Breast epithelium (tissue), 4 donors: ENCODE measurements at regions of chr17 and their contacts with region 1.

Region 1: GRCh38 chr17:21397341-21398190 is 21.4 kb downstream of the KCNJ12 start:
- DNase-seq: no peak
- H3K4me3 ChIP-seq: no peak overlapping the region
- H3K27ac ChIP-seq: peak overlapping the region in 1 of 2 donors; percentile 58
- H3K4me1 ChIP-seq: no peaks in the 10 kb centered on the region
- H3K27me3 ChIP-seq: no peaks in the 10 kb centered on the region
- CTCF ChIP-seq: no peak
- POLR2A ChIP-seq: no peak

Region 2: DNA sequence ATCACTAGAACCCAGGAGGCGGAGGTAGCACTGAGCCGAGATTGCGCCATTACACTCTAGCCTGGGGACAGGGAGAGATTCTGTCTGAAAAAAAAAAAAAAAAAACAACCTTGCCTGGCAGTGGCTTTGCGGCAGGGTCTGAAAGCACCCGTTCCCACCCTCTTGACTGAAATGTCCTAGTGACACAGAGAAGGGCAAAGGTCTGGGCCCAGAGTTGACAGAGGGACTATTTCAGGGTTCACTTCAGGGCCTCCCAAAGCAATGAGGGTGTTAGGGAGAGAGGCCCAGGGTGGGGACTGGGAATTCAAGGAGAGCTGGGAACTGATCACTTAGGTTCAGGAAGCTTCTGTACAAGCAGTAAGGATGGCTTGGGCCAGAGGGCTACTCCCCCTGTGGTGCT is 831.9 kb before region 1 on chr17:
- intact Hi-C with region 1: loop called (anchors 5 kb)
- DNase-seq: no peak
- H3K4me3 ChIP-seq: no peak overlapping the region
- H3K27ac ChIP-seq: no peak overlapping the region
- H3K4me1 ChIP-seq: no peaks in the 10 kb centered on the region
- H3K27me3 ChIP-seq: no peaks in the 10 kb centered on the region
- CTCF ChIP-seq: no peak
- POLR2A ChIP-seq: no peak

Region 3: GRCh38 chr17:21345236-21345635 is 52.3 kb before region 1 on chr17:
- intact Hi-C with region 1: no loop called
- DNase-seq: peak in 1 of 2 donors; percentile 68
- H3K4me3 ChIP-seq: no peak overlapping the region
- H3K27ac ChIP-seq: no peak overlapping the region
- H3K4me1 ChIP-seq: no peaks in the 10 kb centered on the region
- H3K27me3 ChIP-seq: no peaks in the 10 kb centered on the region
- CTCF ChIP-seq: no peak
- POLR2A ChIP-seq: no peak

Region 4: DNA sequence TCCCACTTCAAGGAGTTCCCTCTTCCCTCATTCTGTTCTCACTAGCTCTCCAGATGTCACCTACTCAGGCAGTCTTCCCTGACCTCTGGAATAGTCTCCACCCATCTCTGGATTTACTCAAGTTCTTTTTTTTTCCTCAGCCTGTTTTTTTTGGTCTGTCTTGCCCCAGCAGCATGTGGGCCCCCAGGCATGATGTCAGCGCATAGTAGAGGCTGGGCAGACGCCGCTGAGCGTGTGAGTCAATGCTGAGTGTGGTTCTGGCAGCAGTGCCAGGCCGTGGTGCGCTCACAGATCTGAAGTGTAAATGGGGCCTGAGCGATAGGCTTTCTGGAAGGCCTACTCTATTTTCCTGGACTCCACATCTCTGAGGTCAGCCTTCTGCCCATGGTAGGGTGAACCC is 292.0 kb after region 1 on chr17:
- intact Hi-C with region 1: loop called (anchors 5 kb)
- DNase-seq: no peak
- H3K4me3 ChIP-seq: no peak overlapping the region
- H3K27ac ChIP-seq: peak overlapping the region in 1 of 2 donors; percentile 10
- H3K4me1 ChIP-seq: no peaks in the 10 kb centered on the region
- H3K27me3 ChIP-seq: no peaks in the 10 kb centered on the region
- CTCF ChIP-seq: no peak
- POLR2A ChIP-seq: no peak